Naive thymus-derived CD4-positive, alpha-beta T cell (primary cell): ENCODE measurements at regions of chr10 and their contacts with region 1.

Region 1: DNA sequence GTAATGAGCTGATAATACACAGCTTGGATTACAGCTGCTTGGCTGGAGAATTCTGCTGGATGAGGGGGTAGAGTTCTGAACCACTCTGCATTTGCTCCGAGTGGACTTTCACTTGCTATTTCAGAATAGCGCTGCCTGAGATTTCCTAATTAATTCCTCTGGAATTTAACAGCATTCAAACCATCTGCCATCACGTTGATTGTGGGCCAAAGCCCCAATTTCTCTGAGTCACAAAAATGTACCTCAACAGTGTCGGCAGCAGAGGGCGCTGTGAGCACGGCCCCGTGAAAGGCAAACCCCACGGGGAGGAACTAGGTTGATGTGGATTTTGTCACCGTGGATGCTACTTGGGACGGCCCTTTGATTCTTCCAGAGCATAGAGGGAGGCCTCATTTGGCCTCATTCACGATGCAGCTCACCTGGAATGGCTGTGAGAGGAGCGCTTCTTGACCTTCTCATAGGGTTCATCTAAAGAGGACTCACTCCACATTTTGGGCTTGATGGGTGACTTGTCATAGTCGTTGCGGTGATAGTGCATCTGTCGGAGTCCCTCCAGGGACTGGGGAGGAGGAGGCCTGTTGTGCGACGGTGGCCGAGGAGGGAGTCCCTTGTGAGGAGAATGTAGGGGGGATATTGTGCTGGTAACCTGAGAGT is 73.3 kb downstream of the PRPF18 start:
- DNase-seq: peak; percentile 29 to 74 (median 64)
- ATAC-seq: peak; percentile 78
- H3K4me3 ChIP-seq: no peak overlapping the region
- H3K4me3 Mint-ChIP-seq: peak overlapping the region in 7 of 10 donors; percentile 9 to 63 (median 48)
- H3K27ac ChIP-seq: no peak overlapping the region
- H3K27ac Mint-ChIP-seq: peak overlapping the region in 4 of 9 donors; percentile 8 to 76 (median 34)
- H3K4me1 ChIP-seq: peaks cover 0 to 16% of the 10 kb centered on the region in 2 donors
- H3K4me1 Mint-ChIP-seq: peaks cover 6 to 16% (median 14%) of the 10 kb centered on the region in 7 donors
- H3K27me3 ChIP-seq: no peaks in the 10 kb centered on the region
- H3K27me3 Mint-ChIP-seq: peaks cover 0 to 4% (median 0%) of the 10 kb centered on the region in 5 donors

Region 2: DNA sequence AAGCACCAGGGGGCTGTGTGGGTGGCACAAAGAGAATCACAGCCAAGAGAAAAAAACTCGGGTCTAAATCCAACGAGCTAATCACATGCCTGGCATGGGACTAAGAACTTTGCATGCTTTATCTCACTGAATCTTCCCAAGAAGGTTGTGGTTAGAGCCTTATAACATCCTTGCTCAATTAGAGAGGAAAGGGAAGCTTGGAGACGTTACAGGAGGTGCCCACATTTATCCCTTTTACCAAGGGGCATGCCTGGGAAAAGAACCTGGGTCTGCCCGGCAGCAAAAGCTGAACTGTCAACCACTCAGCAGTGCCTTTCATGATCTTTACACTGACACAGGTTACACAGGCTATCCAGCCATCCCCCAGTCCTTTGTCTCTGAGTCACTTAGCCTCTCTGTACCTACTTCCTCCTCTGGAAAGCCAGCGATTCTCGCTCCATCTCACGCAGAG is 116.9 kb after region 1 on chr10:
- CTCF ChIA-PET with region 1: interaction called, 7 read pairs
- POLR2A ChIA-PET with region 1: interaction called, 3 read pairs
- intact Hi-C with region 1: loop called (anchors 1 kb)
- DNase-seq: no peak
- ATAC-seq: no peak
- H3K4me3 ChIP-seq: no peak overlapping the region
- H3K4me3 Mint-ChIP-seq: no peak overlapping the region
- H3K27ac ChIP-seq: no peak overlapping the region
- H3K27ac Mint-ChIP-seq: no peak overlapping the region
- H3K4me1 ChIP-seq: peaks cover 0 to 4% of the 10 kb centered on the region in 2 donors
- H3K4me1 Mint-ChIP-seq: peaks cover 0 to 6% (median 0%) of the 10 kb centered on the region in 7 donors
- H3K27me3 ChIP-seq: no peaks in the 10 kb centered on the region
- H3K27me3 Mint-ChIP-seq: peaks cover 8 to 18% (median 11%) of the 10 kb centered on the region in 5 donors

Region 3: DNA sequence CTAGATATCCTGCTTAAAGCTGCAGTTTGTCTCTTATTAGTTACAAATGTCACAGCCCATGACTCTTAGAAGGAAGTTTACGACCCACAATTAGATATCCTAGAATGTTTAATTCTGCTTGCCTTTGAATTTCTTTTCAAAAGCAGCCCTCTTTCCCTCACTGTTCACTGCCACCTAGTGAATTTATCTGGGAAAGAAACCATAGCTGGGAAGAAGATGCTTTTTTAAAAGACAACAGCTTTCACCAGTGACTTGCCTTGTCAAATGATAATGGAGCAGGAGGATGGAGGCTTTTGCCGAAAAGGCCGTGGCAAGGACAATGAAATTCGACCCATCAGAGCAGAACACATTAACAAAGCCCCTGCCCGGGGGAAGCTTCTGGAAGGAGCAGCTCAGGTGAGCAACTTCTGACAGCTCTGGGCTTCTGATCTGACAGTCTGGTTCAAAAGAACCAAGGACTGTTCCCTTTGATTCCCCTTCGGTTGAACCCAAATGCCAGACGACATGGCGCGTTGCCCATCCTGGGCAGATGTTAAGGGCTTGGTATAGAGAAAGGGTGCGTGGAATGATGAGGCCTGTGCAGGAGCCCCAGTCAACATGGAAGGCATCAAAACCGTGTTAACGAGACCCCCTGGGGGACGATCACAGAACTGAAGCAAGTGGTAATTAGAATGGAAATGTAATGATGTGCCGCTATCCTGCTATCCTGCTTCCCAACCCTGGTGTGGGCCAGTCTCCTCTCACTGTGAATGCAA is 433.9 kb after region 1 on chr10:
- CTCF ChIA-PET with region 1: no interaction called
- POLR2A ChIA-PET with region 1: no interaction called
- intact Hi-C with region 1: loop called in 1 of 2 experiments (anchors 1 kb)
- DNase-seq: peak in 4 of 9 donors; percentile 6 to 13 (median 12)
- ATAC-seq: no peak
- H3K4me3 ChIP-seq: no peak overlapping the region
- H3K4me3 Mint-ChIP-seq: no peak overlapping the region
- H3K27ac ChIP-seq: no peak overlapping the region
- H3K27ac Mint-ChIP-seq: peak overlapping the region in 1 of 9 donors; percentile 20
- H3K4me1 ChIP-seq: no peaks in the 10 kb centered on the region
- H3K4me1 Mint-ChIP-seq: peaks cover 0 to 13% (median 4%) of the 10 kb centered on the region in 7 donors
- H3K27me3 ChIP-seq: no peaks in the 10 kb centered on the region
- H3K27me3 Mint-ChIP-seq: no peaks in the 10 kb centered on the region

Region 4: GRCh38 chr10:14185316-14186045 is 525.5 kb after region 1 on chr10:
- CTCF ChIA-PET with region 1: no interaction called
- POLR2A ChIA-PET with region 1: no interaction called
- intact Hi-C with region 1: loop called in 1 of 2 experiments (anchors 10 kb)
- DNase-seq: peak in 4 of 9 donors; percentile 30 to 75 (median 74)
- ATAC-seq: peak; percentile 87
- H3K4me3 ChIP-seq: peak overlapping the region; percentile 37
- H3K4me3 Mint-ChIP-seq: peak overlapping the region; percentile 18 to 88 (median 77)
- H3K27ac ChIP-seq: peak overlapping the region; percentile 61
- H3K27ac Mint-ChIP-seq: peak overlapping the region; percentile 88 to 98 (median 95)
- H3K4me1 ChIP-seq: peaks cover 0 to 12% of the 10 kb centered on the region in 2 donors
- H3K4me1 Mint-ChIP-seq: peaks cover 12 to 35% (median 22%) of the 10 kb centered on the region in 7 donors
- H3K27me3 ChIP-seq: peaks cover 0 to 5% of the 10 kb centered on the region in 2 donors
- H3K27me3 Mint-ChIP-seq: peaks cover 17 to 69% (median 21%) of the 10 kb centered on the region in 5 donors